Mucosa of descending colon (tissue), 3 donors: ENCODE measurements at regions of chr1 and their contacts with region 1.

Region 1: GRCh38 chr1:53278201-53278725 is 39.9 kb upstream of the MAGOH start:
- DNase-seq: peak in 2 of 3 donors; percentile 72 to 80
- ATAC-seq: peak; percentile 64
- H3K4me3 ChIP-seq: no peak overlapping the region
- H3K4me1 ChIP-seq: no peaks in the 10 kb centered on the region
- CTCF ChIP-seq: peak; percentile 73

Region 2: DNA sequence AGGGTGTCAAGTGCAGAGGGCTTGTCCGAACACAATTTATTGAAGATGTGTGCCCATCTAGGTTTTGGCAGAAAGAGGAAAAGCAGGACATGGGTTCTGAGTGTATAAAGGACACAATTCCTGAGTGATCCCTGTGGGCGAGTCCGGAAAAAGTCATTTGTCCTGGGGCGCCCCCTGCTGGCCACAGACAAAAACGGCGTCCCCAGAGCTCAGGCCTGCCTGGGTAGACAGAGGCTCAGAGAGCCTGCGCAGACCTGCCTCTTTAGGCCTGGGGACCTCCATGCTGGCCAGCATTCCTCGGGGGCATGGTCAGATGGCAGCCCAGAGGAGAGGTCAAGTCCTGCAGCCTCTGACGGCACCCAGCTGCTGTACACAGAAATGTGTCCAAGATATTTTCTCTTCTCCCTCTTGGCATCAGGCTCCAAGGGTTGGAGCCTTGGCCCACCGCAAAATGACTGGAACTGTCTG is 115.1 kb after region 1 on chr1:
- intact Hi-C with region 1: loop called (anchors 2 kb)
- DNase-seq: peak; percentile 67 to 86 (median 76)
- ATAC-seq: peak; percentile 88
- H3K4me3 ChIP-seq: no peak overlapping the region
- H3K4me1 ChIP-seq: no peaks in the 10 kb centered on the region
- CTCF ChIP-seq: peak; percentile 81